Esophagus squamous epithelium (tissue), 5 donors: ENCODE measurements at regions of chr14 and their contacts with region 1.

Region 1: GRCh38 chr14:35416108-35416750 is 11.7 kb upstream of the NFKBIA start:
- DNase-seq: no peak
- H3K4me3 ChIP-seq: no peak overlapping the region
- H3K27ac ChIP-seq: no peak overlapping the region
- H3K4me1 ChIP-seq: peaks cover 0 to 9% (median 0%) of the 10 kb centered on the region in 3 donors
- H3K27me3 ChIP-seq: no peaks in the 10 kb centered on the region
- CTCF ChIP-seq: no peak
- POLR2A ChIP-seq: no peak

Region 2: GRCh38 chr14:34665785-34666435 is 750.3 kb before region 1 on chr14:
- intact Hi-C with region 1: loop called (anchors 10 kb)
- DNase-seq: no peak
- H3K4me3 ChIP-seq: no peak overlapping the region
- H3K27ac ChIP-seq: peak overlapping the region in 2 of 4 donors; percentile 39 to 57
- H3K4me1 ChIP-seq: no peaks in the 10 kb centered on the region
- H3K27me3 ChIP-seq: no peaks in the 10 kb centered on the region
- CTCF ChIP-seq: no peak
- POLR2A ChIP-seq: no peak

Region 3: GRCh38 chr14:35140718-35141581 is 275.3 kb before region 1 on chr14:
- intact Hi-C with region 1: loop called (anchors 5 kb)
- DNase-seq: no peak
- H3K4me3 ChIP-seq: no peak overlapping the region
- H3K27ac ChIP-seq: no peak overlapping the region
- H3K4me1 ChIP-seq: no peaks in the 10 kb centered on the region
- H3K27me3 ChIP-seq: no peaks in the 10 kb centered on the region
- CTCF ChIP-seq: peak in 4 of 6 experiments; percentile 38 to 72 (median 54)
- POLR2A ChIP-seq: no peak

Region 4: DNA sequence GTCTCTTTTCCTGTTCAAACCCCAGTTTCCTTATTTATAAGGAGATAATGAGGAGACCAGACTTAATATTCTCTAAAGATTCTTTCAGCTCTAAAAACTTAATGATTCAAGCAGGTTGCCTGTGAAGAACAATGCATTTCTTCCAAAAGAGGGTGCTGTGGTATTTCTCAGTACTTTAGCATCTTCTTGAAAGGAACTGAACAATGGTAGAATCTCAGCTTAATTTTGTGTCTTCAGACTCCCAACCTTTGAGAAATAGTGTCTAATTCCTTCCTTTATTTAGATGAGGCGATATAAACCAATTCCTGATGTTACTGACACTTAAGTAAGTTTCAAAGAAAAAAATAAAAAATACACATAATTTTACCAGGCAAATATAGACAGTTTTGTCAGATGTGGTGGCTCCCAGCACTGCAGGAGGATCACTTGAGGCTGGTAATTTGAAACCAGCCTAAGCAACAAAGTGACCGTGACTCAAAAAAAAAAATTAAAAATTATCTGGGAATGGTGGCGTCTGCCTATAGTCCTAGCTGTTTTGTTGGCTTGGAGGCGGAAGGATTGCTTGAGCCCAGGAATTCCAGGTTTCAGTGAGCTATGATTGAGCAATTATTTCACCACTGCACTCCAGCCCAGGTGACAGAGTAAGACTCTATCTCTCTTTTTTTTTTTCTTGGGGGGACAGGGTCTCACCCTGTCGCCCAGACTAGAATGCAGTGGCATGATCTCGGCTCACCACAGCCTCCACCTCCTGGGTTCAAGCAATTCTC is 200.9 kb before region 1 on chr14:
- intact Hi-C with region 1: loop called (anchors 5 kb)
- DNase-seq: no peak
- H3K4me3 ChIP-seq: no peak overlapping the region
- H3K27ac ChIP-seq: peak overlapping the region in 2 of 4 donors; percentile 52 to 73
- H3K4me1 ChIP-seq: peaks cover 0 to 24% (median 16%) of the 10 kb centered on the region in 3 donors
- H3K27me3 ChIP-seq: no peaks in the 10 kb centered on the region
- CTCF ChIP-seq: peak in 3 of 6 experiments; percentile 13 to 41 (median 38)
- POLR2A ChIP-seq: no peak